ENCODE measurements at regions of chr7 and their contacts with region 1.

Region 1: DNA sequence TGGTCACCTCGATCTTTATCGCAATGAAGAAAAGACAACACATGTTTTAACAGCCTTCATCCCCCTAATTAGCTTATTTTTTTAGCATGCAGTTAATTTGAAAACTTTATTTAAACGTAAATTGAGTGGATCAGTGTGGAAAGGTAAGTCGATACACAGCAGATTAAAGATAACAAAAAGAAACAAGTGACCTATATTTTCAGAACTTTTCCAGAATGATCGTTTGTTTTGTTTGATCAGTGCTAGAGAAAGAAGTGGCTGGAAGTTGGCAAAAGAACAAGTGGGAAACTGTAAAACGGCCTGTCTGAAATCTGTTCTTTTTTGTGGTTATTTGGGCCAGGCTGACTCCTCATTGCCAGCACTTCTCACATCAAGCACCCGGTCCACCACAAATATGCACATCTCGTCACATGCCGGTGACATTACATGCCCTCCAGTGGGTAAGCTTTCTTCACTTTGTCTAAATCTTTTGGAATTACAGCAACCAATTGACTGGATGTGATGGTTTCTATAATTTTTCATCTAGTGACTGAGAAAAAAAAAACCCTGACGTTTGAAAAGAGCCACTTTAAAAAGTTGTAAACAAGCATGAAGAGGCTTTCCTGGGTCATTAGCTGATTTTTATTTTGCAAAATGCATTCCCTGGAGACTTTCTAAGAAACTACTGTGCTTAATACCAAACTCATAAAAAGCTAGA is 33.2 kb downstream of the C7orf33 start:
- DNase-seq: no peak
- H3K4me3 ChIP-seq: no peak overlapping the region
- H3K27ac ChIP-seq: no peak overlapping the region; a peak in 1 of 4 replicates
- H3K4me1 ChIP-seq: peaks cover 0 to 22% of the 10 kb centered on the region in 2 experiments; a peak in 2 of 4 replicates
- H3K27me3 ChIP-seq: no peaks in the 10 kb centered on the region
- CTCF ChIP-seq: no peak
- EP300 ChIP-seq: no peak
- RAD21 ChIP-seq: no peak

Region 2: DNA sequence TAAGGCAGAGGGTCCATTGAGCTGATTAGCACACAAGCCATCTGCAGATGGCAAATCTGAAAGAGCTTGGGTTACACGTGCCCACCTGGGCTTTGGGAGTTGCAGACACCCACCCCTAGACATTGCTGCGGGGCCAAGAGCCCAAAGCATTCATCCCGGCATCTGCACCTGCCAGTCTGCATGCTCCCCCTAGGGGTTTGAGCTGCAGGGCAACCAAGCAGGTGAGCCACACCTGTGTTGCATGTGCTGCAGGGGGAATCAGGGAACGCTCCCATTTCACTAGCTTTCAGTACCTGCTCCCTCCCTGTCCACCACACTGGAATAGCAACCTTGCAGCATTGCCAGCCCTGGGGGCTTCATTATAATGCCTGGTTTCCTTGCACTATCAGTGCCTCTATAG is 12.0 kb before region 1 on chr7:
- CTCF ChIA-PET with region 1: interaction called, 19 read pairs
- POLR2A ChIA-PET with region 1: no interaction called
- DNase-seq: no peak
- H3K4me3 ChIP-seq: no peak overlapping the region
- H3K27ac ChIP-seq: no peak overlapping the region
- H3K4me1 ChIP-seq: peaks cover 8 to 16% of the 10 kb centered on the region in 2 experiments; a peak in 3 of 4 replicates
- H3K27me3 ChIP-seq: peaks cover 9% of the 10 kb centered on the region; the same call in 1 of the 2 replicates
- CTCF ChIP-seq: no peak
- EP300 ChIP-seq: no peak
- RAD21 ChIP-seq: no peak

Measured in SK-N-SH (cell line).